ENCODE measurements at regions of chr6 and their contacts with region 1.

Region 1: GRCh38 chr6:70686548-70687133 is 19.0 kb downstream of the SMAP1 start:
- DNase-seq: peak in 6 of 9 donors; percentile 10 to 45 (median 32)
- ATAC-seq: peak; percentile 71
- H3K4me3 ChIP-seq: no peak overlapping the region
- H3K4me3 Mint-ChIP-seq: no peak overlapping the region
- H3K27ac ChIP-seq: no peak overlapping the region
- H3K27ac Mint-ChIP-seq: no peak overlapping the region
- H3K4me1 ChIP-seq: peaks cover 3 to 5% of the 10 kb centered on the region in 2 donors
- H3K4me1 Mint-ChIP-seq: peaks cover 26 to 70% (median 63%) of the 10 kb centered on the region in 7 donors
- H3K27me3 ChIP-seq: no peaks in the 10 kb centered on the region
- H3K27me3 Mint-ChIP-seq: no peaks in the 10 kb centered on the region

Region 2: DNA sequence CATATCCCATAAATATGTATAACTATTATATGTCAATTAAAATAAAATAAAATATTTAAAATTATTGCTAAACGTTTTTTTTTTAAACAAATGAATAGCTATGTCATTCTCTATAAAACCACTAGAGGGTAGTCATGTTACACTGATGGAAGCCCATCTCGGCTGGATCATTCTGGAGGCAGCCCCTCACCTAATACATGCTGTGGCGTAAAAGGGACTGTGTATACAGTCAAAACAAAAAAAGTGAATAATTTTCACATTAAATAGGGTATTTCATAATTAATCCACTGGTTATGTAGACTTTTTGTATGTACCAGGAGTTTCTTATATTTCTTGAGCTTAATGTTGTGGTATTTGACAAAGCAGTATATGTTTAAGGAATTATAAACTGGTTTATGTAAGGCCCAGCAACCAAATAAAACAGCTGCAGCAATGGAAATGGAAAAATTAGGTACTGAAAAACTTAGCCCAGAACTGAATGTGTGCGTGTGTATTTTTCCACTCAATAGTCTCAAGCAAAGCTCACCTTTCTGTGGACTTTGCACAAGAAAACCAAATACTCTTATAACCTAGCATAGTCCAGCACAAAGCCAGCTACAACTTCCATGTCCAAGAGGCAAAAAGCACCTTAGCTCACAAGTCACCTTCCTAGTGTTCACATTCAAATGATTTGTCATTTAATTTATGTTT is 465.5 kb before region 1 on chr6:
- CTCF ChIA-PET with region 1: no interaction called
- POLR2A ChIA-PET with region 1: no interaction called
- intact Hi-C with region 1: loop called in 1 of 2 experiments (anchors 1 kb)
- DNase-seq: peak in 4 of 9 donors; percentile 3 to 16 (median 11)
- ATAC-seq: peak; percentile 50
- H3K4me3 ChIP-seq: no peak overlapping the region
- H3K4me3 Mint-ChIP-seq: no peak overlapping the region
- H3K27ac ChIP-seq: no peak overlapping the region
- H3K27ac Mint-ChIP-seq: no peak overlapping the region
- H3K4me1 ChIP-seq: no peaks in the 10 kb centered on the region
- H3K4me1 Mint-ChIP-seq: peaks cover 0 to 1% (median 0%) of the 10 kb centered on the region in 7 donors
- H3K27me3 ChIP-seq: no peaks in the 10 kb centered on the region
- H3K27me3 Mint-ChIP-seq: peaks cover 4 to 31% (median 7%) of the 10 kb centered on the region in 5 donors

Region 3: GRCh38 chr6:70369332-70369950 is 317.2 kb before region 1 on chr6:
- CTCF ChIA-PET with region 1: interaction called, 4 read pairs
- POLR2A ChIA-PET with region 1: no interaction called
- intact Hi-C with region 1: loop called (anchors 1 kb)
- DNase-seq: peak; percentile 26 to 64 (median 58)
- ATAC-seq: peak; percentile 92
- H3K4me3 ChIP-seq: no peak overlapping the region
- H3K4me3 Mint-ChIP-seq: no peak overlapping the region
- H3K27ac ChIP-seq: no peak overlapping the region
- H3K27ac Mint-ChIP-seq: no peak overlapping the region
- H3K4me1 ChIP-seq: no peaks in the 10 kb centered on the region
- H3K4me1 Mint-ChIP-seq: peaks cover 0 to 7% (median 0%) of the 10 kb centered on the region in 7 donors
- H3K27me3 ChIP-seq: no peaks in the 10 kb centered on the region
- H3K27me3 Mint-ChIP-seq: peaks cover 10 to 39% (median 19%) of the 10 kb centered on the region in 5 donors

Region 4: GRCh38 chr6:70520575-70520974 is 166.1 kb before region 1 on chr6:
- CTCF ChIA-PET with region 1: interaction called, 21 read pairs
- POLR2A ChIA-PET with region 1: no interaction called
- intact Hi-C with region 1: loop called (anchors 1 kb)
- DNase-seq: peak in 5 of 9 donors; percentile 11 to 32 (median 15)
- ATAC-seq: peak; percentile 47
- H3K4me3 ChIP-seq: no peak overlapping the region
- H3K4me3 Mint-ChIP-seq: no peak overlapping the region
- H3K27ac ChIP-seq: no peak overlapping the region
- H3K27ac Mint-ChIP-seq: no peak overlapping the region
- H3K4me1 ChIP-seq: no peaks in the 10 kb centered on the region
- H3K4me1 Mint-ChIP-seq: peaks cover 0 to 12% (median 9%) of the 10 kb centered on the region in 7 donors
- H3K27me3 ChIP-seq: no peaks in the 10 kb centered on the region
- H3K27me3 Mint-ChIP-seq: no peaks in the 10 kb centered on the region

Region 5: GRCh38 chr6:70566751-70567382 is 119.8 kb before region 1 on chr6 and contains the start of gene SDHAF4:
- CTCF ChIA-PET with region 1: interaction called, 5 read pairs
- POLR2A ChIA-PET with region 1: no interaction called
- intact Hi-C with region 1: loop called (anchors 1 kb)
- DNase-seq: peak; percentile 89 to 96 (median 94)
- ATAC-seq: peak; percentile 100
- H3K4me3 ChIP-seq: peak within 1 kb of the TSS; percentile 88
- H3K4me3 Mint-ChIP-seq: peak within 1 kb of the TSS; percentile 83 to 91 (median 87)
- H3K27ac ChIP-seq: peak within 1 kb of the TSS; percentile 81
- H3K27ac Mint-ChIP-seq: peak within 1 kb of the TSS; percentile 76 to 95 (median 91)
- H3K4me1 ChIP-seq: peaks cover 6 to 8% of the 10 kb centered on the region in 2 donors
- H3K4me1 Mint-ChIP-seq: peaks cover 5 to 32% (median 22%) of the 10 kb centered on the region in 7 donors
- H3K27me3 ChIP-seq: no peaks in the 10 kb centered on the region
- H3K27me3 Mint-ChIP-seq: peaks cover 0 to 2% (median 0%) of the 10 kb centered on the region in 5 donors
- total RNA-seq, gene SDHAF4: 4.7 to 14.5 (median 10.3) TPM

Region 6: GRCh38 chr6:70616728-70617260 is 69.8 kb before region 1 on chr6:
- CTCF ChIA-PET with region 1: no interaction called
- POLR2A ChIA-PET with region 1: no interaction called
- intact Hi-C with region 1: no loop called
- DNase-seq: no peak
- ATAC-seq: no peak
- H3K4me3 ChIP-seq: no peak overlapping the region
- H3K4me3 Mint-ChIP-seq: no peak overlapping the region
- H3K27ac ChIP-seq: no peak overlapping the region
- H3K27ac Mint-ChIP-seq: no peak overlapping the region
- H3K4me1 ChIP-seq: no peaks in the 10 kb centered on the region
- H3K4me1 Mint-ChIP-seq: peaks cover 0 to 2% (median 0%) of the 10 kb centered on the region in 7 donors
- H3K27me3 ChIP-seq: no peaks in the 10 kb centered on the region
- H3K27me3 Mint-ChIP-seq: peaks cover 0 to 16% (median 0%) of the 10 kb centered on the region in 5 donors

Region 7: DNA sequence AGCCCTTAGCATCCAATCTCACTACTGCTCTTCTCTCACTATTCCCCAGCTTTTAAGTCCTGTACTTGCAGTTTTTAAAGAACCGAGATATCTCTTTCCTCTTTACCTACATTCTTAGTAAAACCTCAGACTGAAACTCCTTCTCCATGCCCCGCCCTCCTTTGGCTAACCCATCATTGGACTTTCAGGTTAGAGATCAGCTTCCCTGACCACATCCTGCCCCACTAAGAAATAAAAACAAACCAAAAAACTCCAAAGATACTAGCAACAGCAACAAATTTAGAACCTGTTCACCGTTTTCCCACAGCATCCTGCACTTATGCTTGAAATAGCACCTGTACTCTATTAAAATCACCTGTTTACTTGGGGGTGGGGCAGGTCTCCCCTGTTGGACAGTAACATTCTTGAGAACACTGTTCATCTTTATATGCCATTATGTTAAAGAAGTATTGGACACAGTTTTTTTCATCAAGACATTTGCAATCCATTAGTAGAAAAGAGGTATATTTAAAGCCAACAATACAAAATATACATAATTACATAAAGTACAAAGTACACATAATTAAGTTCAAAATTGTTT is 35.2 kb before region 1 on chr6:
- CTCF ChIA-PET with region 1: no interaction called
- POLR2A ChIA-PET with region 1: no interaction called
- intact Hi-C with region 1: loop called in 1 of 2 experiments (anchors 2 kb)
- DNase-seq: peak in 8 of 9 donors; percentile 24 to 68 (median 58)
- ATAC-seq: peak; percentile 82
- H3K4me3 ChIP-seq: peak overlapping the region; percentile 18
- H3K4me3 Mint-ChIP-seq: peak overlapping the region; percentile 25 to 75 (median 58)
- H3K27ac ChIP-seq: peak overlapping the region; percentile 6
- H3K27ac Mint-ChIP-seq: peak overlapping the region; percentile 32 to 84 (median 76)
- H3K4me1 ChIP-seq: peaks cover 21 to 22% of the 10 kb centered on the region in 2 donors
- H3K4me1 Mint-ChIP-seq: peaks cover 13 to 52% (median 25%) of the 10 kb centered on the region in 7 donors
- H3K27me3 ChIP-seq: no peaks in the 10 kb centered on the region
- H3K27me3 Mint-ChIP-seq: no peaks in the 10 kb centered on the region

Region 8: GRCh38 chr6:70884074-70884983 is 197.7 kb after region 1 on chr6:
- CTCF ChIA-PET with region 1: no interaction called
- POLR2A ChIA-PET with region 1: no interaction called
- intact Hi-C with region 1: loop called in 1 of 2 experiments (anchors 1 kb)
- DNase-seq: peak; percentile 19 to 64 (median 45)
- ATAC-seq: peak; percentile 85
- H3K4me3 ChIP-seq: no peak overlapping the region
- H3K4me3 Mint-ChIP-seq: no peak overlapping the region
- H3K27ac ChIP-seq: no peak overlapping the region
- H3K27ac Mint-ChIP-seq: no peak overlapping the region
- H3K4me1 ChIP-seq: no peaks in the 10 kb centered on the region
- H3K4me1 Mint-ChIP-seq: peaks cover 0 to 4% (median 0%) of the 10 kb centered on the region in 7 donors
- H3K27me3 ChIP-seq: no peaks in the 10 kb centered on the region
- H3K27me3 Mint-ChIP-seq: peaks cover 8 to 26% (median 20%) of the 10 kb centered on the region in 5 donors